Psoas muscle (tissue), 8 donors: ENCODE measurements at regions of chr9 and their contacts with region 1.

Region 1: DNA sequence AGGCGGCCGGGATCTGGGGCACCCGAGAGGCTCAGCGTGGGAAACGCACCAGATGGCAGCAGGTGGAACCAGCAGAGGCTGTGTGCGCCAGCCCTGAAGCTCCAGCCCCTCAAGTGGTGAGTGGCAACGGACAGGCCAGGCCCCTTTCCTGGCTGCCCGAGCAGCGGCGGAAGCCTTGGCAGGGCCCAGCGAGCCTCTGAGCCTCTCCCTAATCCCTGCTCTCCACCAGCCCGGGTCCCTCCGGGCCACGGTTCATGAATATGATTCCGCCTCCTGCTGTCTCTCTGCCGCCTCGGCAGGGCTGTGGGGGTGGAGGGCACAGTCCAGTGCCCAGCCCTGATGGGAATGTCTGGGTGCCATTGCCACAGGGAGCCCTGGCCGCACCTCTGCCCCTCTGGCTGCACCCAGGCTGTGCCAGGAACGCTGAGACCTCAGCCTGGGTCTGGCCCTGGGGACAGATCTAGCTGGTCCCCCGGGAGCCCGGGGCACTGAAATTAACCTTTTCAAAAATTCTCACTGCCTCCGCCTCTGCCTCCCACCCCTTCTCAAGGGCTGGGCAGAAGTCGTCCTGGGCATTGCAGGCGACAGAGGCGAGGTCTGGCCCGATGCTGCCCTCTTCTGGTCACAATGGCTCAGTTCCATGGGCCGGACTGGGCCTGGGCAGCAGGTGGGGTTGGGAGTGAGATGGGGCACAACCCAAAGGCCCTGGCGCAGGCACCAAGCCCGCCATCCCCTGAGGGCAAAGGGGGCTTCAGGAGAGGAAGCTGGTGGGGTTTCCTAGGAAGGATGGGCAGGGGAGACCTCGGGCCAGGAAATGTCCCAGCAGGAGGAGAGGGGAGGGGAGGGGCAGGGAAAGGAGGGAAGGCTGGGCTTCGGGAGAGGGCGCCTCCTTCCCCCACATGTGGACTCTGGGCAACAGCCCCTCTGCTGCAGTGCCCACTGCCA is 20.3 kb downstream of the CCDC187 start:
- DNase-seq: peak; percentile 72 to 84
- ATAC-seq: peak; percentile 93 to 98 (median 93)
- H3K4me3 ChIP-seq: peak overlapping the region; percentile 47
- H3K27ac ChIP-seq: no peak overlapping the region
- H3K4me1 ChIP-seq: no peaks in the 10 kb centered on the region
- H3K27me3 ChIP-seq: peaks cover 0 to 48% (median 5%) of the 10 kb centered on the region in 3 donors
- CTCF ChIP-seq: peak; percentile 77

Region 2: DNA sequence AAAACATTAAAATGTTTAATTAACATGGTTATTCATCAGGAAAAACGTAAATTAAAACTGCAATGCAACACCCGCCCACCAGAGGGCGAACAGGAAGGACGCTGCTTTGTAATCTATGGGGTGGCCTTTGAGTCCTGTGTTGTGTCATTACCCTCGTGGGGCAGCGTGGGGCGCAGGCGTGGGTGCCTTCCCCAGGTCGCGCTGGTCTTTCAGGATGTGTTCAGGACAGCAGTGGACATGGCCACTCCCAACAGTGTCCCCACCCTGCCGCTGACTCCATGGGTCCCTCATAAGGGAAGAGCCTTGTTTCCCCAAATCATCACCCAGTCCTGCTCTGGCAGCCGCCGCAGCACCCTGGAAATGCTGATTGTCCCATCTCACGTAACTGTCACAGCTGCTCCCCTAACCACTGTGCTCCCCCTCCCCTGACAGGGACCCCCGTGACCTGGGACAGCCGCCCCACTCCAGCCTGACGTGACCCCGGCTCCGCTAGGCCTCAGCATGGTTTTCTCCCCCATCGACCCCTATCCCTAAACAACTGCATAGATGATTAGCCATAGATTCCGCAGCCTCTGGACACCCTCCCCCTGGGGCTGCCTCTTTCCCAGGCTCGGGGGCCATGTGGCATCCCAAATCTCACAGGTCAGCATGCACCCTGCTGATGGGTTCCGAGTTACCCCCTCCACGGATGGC is 680.6 kb before region 1 on chr9:
- intact Hi-C with region 1: loop called (anchors 5 to 10 kb)
- DNase-seq: peak in 1 of 2 donors; percentile 48
- ATAC-seq: peak in 2 of 4 donors; percentile 44 to 46
- H3K4me3 ChIP-seq: no peak overlapping the region
- H3K27ac ChIP-seq: no peak overlapping the region
- H3K4me1 ChIP-seq: no peaks in the 10 kb centered on the region
- H3K27me3 ChIP-seq: peaks cover 0 to 36% (median 0%) of the 10 kb centered on the region in 3 donors
- CTCF ChIP-seq: peak; percentile 63

Region 3: GRCh38 chr9:135961277-135961705 is 322.3 kb before region 1 on chr9 and contains the start of gene UBAC1:
- intact Hi-C with region 1: loop called in 1 of 2 experiments (anchors 10 kb)
- DNase-seq: peak; percentile 97 to 98
- ATAC-seq: peak; percentile 76 to 87 (median 82)
- H3K4me3 ChIP-seq: peak within 1 kb of the TSS; percentile 96
- H3K27ac ChIP-seq: peak within 1 kb of the TSS; percentile 93
- H3K4me1 ChIP-seq: peaks cover 28% of the 10 kb centered on the region
- H3K27me3 ChIP-seq: no peaks in the 10 kb centered on the region
- CTCF ChIP-seq: peak; percentile 32
- total RNA-seq, gene UBAC1: 140 to 233 (median 174) TPM

Region 4: GRCh38 chr9:136143216-136144001 is 140.2 kb before region 1 on chr9:
- intact Hi-C with region 1: loop called in 1 of 2 experiments (anchors 10 kb)
- DNase-seq: peak in 1 of 2 donors; percentile 46
- ATAC-seq: no peak
- H3K4me3 ChIP-seq: no peak overlapping the region
- H3K27ac ChIP-seq: no peak overlapping the region
- H3K4me1 ChIP-seq: no peaks in the 10 kb centered on the region
- H3K27me3 ChIP-seq: peaks cover 0 to 58% (median 15%) of the 10 kb centered on the region in 3 donors
- CTCF ChIP-seq: no peak

Region 5: GRCh38 chr9:136170006-136170901 is 113.3 kb before region 1 on chr9:
- intact Hi-C with region 1: loop called (anchors 2 to 10 kb)
- DNase-seq: no peak
- ATAC-seq: peak in 1 of 4 donors; percentile 53
- H3K4me3 ChIP-seq: no peak overlapping the region
- H3K27ac ChIP-seq: no peak overlapping the region
- H3K4me1 ChIP-seq: no peaks in the 10 kb centered on the region
- H3K27me3 ChIP-seq: peaks cover 0 to 62% (median 6%) of the 10 kb centered on the region in 3 donors
- CTCF ChIP-seq: peak; percentile 50

Region 6: DNA sequence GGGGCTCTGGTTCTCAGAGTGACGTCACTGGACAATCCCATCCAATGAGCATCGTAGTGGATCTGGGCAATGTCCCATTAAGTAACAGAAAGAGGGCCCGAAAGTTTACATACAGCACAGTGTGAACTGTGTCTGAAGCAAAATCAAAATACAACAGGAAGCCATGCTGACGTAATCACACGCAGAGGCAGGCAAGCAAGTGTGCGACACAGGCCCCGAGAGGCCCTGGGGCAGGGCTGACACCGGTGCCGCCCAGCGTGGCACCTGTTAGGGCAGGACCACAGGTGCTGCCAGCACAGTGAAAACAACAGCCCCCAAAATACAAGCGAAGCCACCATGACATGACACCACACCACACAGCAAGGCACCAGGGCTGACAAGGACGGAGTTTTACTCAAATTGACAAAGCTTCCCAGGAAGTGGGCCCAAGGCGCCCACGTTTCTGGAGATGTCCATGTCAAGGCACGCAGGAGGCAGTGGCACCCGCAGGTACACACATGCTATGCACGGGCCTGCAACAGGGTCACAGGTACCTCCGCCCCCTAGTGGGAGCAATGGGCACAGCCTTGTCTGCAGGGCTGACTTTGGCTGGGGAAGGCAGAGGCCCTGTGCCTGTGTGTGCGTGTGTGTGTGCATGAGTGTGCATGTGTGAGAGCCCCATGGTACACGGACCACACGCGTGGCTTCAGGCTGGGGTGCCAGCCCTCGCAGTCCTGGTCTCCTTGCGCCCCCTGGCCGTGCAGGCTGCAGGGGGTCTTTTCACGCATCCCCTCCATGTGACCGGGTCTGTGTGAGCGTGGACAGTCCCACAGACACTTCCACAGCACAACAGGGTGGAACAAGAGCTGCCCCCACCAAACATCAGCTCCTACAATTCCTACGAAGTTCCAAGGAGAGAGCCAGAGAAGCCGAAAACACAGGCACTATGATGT is 57.5 kb before region 1 on chr9:
- intact Hi-C with region 1: no loop called
- DNase-seq: peak in 1 of 2 donors; percentile 41
- ATAC-seq: peak; percentile 47 to 67 (median 60)
- H3K4me3 ChIP-seq: no peak overlapping the region
- H3K27ac ChIP-seq: no peak overlapping the region
- H3K4me1 ChIP-seq: no peaks in the 10 kb centered on the region
- H3K27me3 ChIP-seq: no peaks in the 10 kb centered on the region
- CTCF ChIP-seq: peak; percentile 51

Region 7: GRCh38 chr9:136312436-136312835 is 28.9 kb after region 1 on chr9:
- intact Hi-C with region 1: no loop called
- DNase-seq: no peak
- ATAC-seq: peak in 1 of 4 donors; percentile 46
- H3K4me3 ChIP-seq: no peak overlapping the region
- H3K27ac ChIP-seq: no peak overlapping the region
- H3K4me1 ChIP-seq: no peaks in the 10 kb centered on the region
- H3K27me3 ChIP-seq: peaks cover 0 to 47% (median 8%) of the 10 kb centered on the region in 3 donors
- CTCF ChIP-seq: peak; percentile 23

Region 8: GRCh38 chr9:136439550-136440408 is 156.2 kb after region 1 on chr9 and contains the start of gene INPP5E:
- intact Hi-C with region 1: no loop called
- DNase-seq: peak; percentile 81 to 87
- ATAC-seq: peak; percentile 83 to 90 (median 88)
- H3K4me3 ChIP-seq: peak within 1 kb of the TSS; percentile 95
- H3K27ac ChIP-seq: peak within 1 kb of the TSS; percentile 79
- H3K4me1 ChIP-seq: peaks cover 26% of the 10 kb centered on the region
- H3K27me3 ChIP-seq: no peaks in the 10 kb centered on the region
- CTCF ChIP-seq: peak; percentile 90
- total RNA-seq, gene INPP5E: 4.9 to 9.6 (median 7.4) TPM